Right cardiac atrium (tissue), 5 donors: ENCODE measurements at regions of chr7 and their contacts with region 1.

Region 1: GRCh38 chr7:88243345-88243909 is 23.6 kb upstream of the SRI start:
- DNase-seq: peak in 1 of 3 donors; percentile 45
- ATAC-seq: peak; percentile 73 to 91
- H3K4me3 ChIP-seq: no peak overlapping the region
- H3K27ac ChIP-seq: no peak overlapping the region
- H3K4me1 ChIP-seq: no peaks in the 10 kb centered on the region
- H3K27me3 ChIP-seq: no peaks in the 10 kb centered on the region

Region 2: GRCh38 chr7:87993269-87993668 is 250.2 kb before region 1 on chr7:
- intact Hi-C with region 1: no loop called
- DNase-seq: no peak
- ATAC-seq: no peak
- H3K4me3 ChIP-seq: no peak overlapping the region
- H3K27ac ChIP-seq: no peak overlapping the region
- H3K4me1 ChIP-seq: no peaks in the 10 kb centered on the region
- H3K27me3 ChIP-seq: no peaks in the 10 kb centered on the region

Region 3: GRCh38 chr7:88350118-88350517 is 106.7 kb after region 1 on chr7:
- intact Hi-C with region 1: loop called in 3 of 4 experiments (anchors 5 to 10 kb)
- DNase-seq: no peak
- ATAC-seq: no peak
- H3K4me3 ChIP-seq: no peak overlapping the region
- H3K27ac ChIP-seq: no peak overlapping the region
- H3K4me1 ChIP-seq: no peaks in the 10 kb centered on the region
- H3K27me3 ChIP-seq: no peaks in the 10 kb centered on the region

Region 4: GRCh38 chr7:88357781-88358525 is 114.5 kb after region 1 on chr7:
- intact Hi-C with region 1: loop called (anchors 2 to 10 kb)
- DNase-seq: no peak
- ATAC-seq: peak; percentile 74 to 89
- H3K4me3 ChIP-seq: peak overlapping the region; percentile 28
- H3K27ac ChIP-seq: no peak overlapping the region
- H3K4me1 ChIP-seq: no peaks in the 10 kb centered on the region
- H3K27me3 ChIP-seq: no peaks in the 10 kb centered on the region

Region 5: GRCh38 chr7:89622838-89623672 is 1379.6 kb after region 1 on chr7:
- intact Hi-C with region 1: loop called in 1 of 4 experiments (anchors 10 kb)
- DNase-seq: no peak
- ATAC-seq: peak; percentile 52 to 65
- H3K4me3 ChIP-seq: no peak overlapping the region
- H3K27ac ChIP-seq: no peak overlapping the region
- H3K4me1 ChIP-seq: no peaks in the 10 kb centered on the region
- H3K27me3 ChIP-seq: no peaks in the 10 kb centered on the region